ENCODE measurements at regions of chr12 and their contacts with region 1.

Region 1: GRCh38 chr12:95473884-95474659 is at the start of gene METAP2:
- DNase-seq: peak; percentile 96
- H3K4me3 Mint-ChIP-seq: peak within 1 kb of the TSS; percentile 96
- H3K27ac Mint-ChIP-seq: peak within 1 kb of the TSS; percentile 98
- H3K4me1 Mint-ChIP-seq: peaks cover 42% of the 10 kb centered on the region
- H3K27me3 Mint-ChIP-seq: no peaks in the 10 kb centered on the region
- total RNA-seq, gene METAP2: 108 to 110 TPM

Region 2: GRCh38 chr12:95003213-95003920 is 470.7 kb before region 1 on chr12 and contains the start of gene NDUFA12:
- CTCF ChIA-PET with region 1: no interaction called
- intact Hi-C with region 1: loop called (anchors 1 kb)
- DNase-seq: peak; percentile 97
- H3K4me3 Mint-ChIP-seq: peak within 1 kb of the TSS; percentile 89
- H3K27ac Mint-ChIP-seq: peak within 1 kb of the TSS; percentile 86
- H3K4me1 Mint-ChIP-seq: peaks cover 51% of the 10 kb centered on the region
- H3K27me3 Mint-ChIP-seq: no peaks in the 10 kb centered on the region
- total RNA-seq, gene NDUFA12: 147 to 160 TPM

Region 3: DNA sequence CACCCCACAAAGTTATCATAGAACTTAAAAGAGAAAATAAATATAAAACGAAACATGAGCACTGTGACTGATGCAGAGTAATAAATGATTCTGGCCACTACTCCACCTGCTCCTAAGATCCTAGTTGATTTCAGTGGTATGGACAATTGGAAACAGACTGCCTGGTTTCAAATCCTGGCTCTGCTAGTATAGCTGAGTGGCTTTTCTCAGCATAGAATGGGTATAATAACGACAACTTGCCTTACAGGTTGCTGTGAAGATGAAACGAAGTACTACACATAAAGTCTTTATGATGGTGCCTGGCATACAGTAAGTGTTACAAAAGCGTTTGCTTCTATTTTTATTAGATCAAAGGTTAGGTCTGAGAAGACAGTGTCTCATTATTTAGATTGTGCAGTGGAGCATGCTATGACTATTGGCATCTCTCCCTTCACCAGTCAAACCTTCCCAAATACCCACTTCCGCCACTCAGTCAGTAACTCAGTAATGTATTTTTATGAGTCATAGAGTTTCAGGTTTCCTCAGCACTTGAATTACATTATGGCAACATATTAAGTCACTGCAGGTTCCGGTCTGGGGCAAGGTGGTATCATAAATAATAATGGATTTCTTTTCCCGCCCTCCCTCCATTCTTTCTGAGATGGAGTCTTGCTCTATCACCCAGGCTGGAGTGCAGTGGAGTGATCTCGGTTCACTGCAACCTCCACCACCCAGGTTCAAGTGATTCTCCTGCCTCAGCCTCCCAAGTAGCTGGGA is 371.0 kb before region 1 on chr12:
- CTCF ChIA-PET with region 1: no interaction called
- intact Hi-C with region 1: loop called (anchors 1 kb)
- DNase-seq: peak; percentile 70
- H3K4me3 Mint-ChIP-seq: no peak overlapping the region
- H3K27ac Mint-ChIP-seq: no peak overlapping the region
- H3K4me1 Mint-ChIP-seq: peaks cover 10% of the 10 kb centered on the region
- H3K27me3 Mint-ChIP-seq: no peaks in the 10 kb centered on the region

Region 4: DNA sequence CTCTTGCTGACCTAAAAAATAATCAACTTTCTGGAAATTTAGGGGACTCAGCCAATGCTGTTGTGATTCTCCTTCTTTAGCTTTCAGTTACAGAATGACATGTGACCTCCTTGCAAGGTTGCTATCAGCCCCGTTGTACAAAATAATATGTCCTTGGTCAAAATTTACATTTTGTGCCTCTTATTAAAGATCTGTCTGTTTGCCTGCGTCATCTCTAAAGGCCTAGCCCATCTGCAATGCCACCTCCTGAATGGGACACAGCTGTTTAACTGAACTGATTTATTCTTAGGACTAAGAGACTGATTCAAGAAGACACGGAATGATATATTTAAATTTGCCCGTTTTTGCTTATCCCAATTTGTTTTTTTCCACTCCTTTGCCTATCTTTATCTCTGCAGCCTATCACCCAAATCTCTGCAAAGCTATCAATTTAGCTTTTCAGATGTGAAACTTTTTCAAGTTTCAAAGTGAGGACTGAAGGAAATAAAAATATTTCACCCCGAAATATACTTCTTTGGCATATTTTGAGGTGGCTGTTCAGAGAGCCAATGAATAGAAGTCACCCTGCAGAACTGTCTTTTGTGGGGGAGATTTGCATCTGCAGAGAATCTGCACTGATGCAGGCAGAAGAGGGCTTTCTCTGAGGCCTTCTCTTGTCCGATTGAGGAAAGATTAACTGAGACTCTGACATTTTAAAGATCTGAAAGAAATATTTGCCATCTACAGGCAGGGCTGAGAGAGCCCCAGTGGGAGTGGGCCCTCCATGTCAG is 130.4 kb before region 1 on chr12:
- CTCF ChIA-PET with region 1: no interaction called
- intact Hi-C with region 1: no loop called
- DNase-seq: no peak
- H3K4me3 Mint-ChIP-seq: no peak overlapping the region
- H3K27ac Mint-ChIP-seq: no peak overlapping the region
- H3K4me1 Mint-ChIP-seq: peaks cover 4% of the 10 kb centered on the region
- H3K27me3 Mint-ChIP-seq: no peaks in the 10 kb centered on the region

Region 5: DNA sequence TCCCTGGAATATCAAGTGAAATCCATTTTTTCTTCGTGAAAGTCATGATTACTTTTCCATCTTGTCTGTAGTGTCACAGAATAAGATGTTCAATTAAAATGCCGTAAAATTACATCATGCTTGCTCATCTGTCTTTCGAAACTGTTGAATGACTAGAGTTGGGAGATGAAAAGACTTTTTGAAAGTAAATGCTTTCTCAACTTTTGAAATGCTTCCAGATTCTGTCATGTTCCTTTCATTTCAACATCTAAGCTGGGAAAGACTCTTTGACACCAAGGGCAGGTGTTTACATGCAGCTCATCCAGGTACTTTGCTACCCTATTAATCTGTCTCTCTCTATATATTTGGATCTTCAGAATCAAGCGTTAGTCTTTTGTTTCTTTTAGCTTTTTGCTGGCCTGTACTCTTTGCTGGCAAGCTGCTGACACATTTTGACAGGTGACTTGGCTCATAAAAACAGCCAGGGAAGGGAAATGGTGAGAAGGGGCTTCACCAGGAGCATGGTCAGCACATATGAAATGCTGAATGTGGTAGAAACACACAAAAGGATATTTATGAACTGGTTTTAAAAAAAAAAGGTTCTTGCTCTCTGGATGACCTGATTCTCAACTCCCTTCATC is 77.1 kb before region 1 on chr12:
- CTCF ChIA-PET with region 1: no interaction called
- intact Hi-C with region 1: loop called (anchors 1 kb)
- DNase-seq: peak; percentile 21
- H3K4me3 Mint-ChIP-seq: no peak overlapping the region
- H3K27ac Mint-ChIP-seq: peak overlapping the region; percentile 54
- H3K4me1 Mint-ChIP-seq: peaks cover 22% of the 10 kb centered on the region
- H3K27me3 Mint-ChIP-seq: peaks cover 25% of the 10 kb centered on the region

Region 6: GRCh38 chr12:95499772-95500171 is 25.7 kb after region 1 on chr12:
- CTCF ChIA-PET with region 1: no interaction called
- intact Hi-C with region 1: loop called (anchors 2 kb)
- DNase-seq: no peak
- H3K4me3 Mint-ChIP-seq: no peak overlapping the region
- H3K27ac Mint-ChIP-seq: no peak overlapping the region
- H3K4me1 Mint-ChIP-seq: peaks cover 29% of the 10 kb centered on the region
- H3K27me3 Mint-ChIP-seq: no peaks in the 10 kb centered on the region

Region 7: GRCh38 chr12:95858479-95859343 is 384.6 kb after region 1 on chr12 and contains the start of gene SNRPF:
- CTCF ChIA-PET with region 1: no interaction called
- intact Hi-C with region 1: loop called (anchors 10 kb)
- DNase-seq: peak; percentile 97
- H3K4me3 Mint-ChIP-seq: no peak within 1 kb of the TSS
- H3K27ac Mint-ChIP-seq: no peak within 1 kb of the TSS
- H3K4me1 Mint-ChIP-seq: peaks cover 25% of the 10 kb centered on the region
- H3K27me3 Mint-ChIP-seq: peaks cover 3% of the 10 kb centered on the region
- total RNA-seq, gene SNRPF: 57.4 to 59.9 TPM